Aorta (tissue), 5 donors: ENCODE measurements at regions of chr3 and their contacts with region 1.

Region 1: DNA sequence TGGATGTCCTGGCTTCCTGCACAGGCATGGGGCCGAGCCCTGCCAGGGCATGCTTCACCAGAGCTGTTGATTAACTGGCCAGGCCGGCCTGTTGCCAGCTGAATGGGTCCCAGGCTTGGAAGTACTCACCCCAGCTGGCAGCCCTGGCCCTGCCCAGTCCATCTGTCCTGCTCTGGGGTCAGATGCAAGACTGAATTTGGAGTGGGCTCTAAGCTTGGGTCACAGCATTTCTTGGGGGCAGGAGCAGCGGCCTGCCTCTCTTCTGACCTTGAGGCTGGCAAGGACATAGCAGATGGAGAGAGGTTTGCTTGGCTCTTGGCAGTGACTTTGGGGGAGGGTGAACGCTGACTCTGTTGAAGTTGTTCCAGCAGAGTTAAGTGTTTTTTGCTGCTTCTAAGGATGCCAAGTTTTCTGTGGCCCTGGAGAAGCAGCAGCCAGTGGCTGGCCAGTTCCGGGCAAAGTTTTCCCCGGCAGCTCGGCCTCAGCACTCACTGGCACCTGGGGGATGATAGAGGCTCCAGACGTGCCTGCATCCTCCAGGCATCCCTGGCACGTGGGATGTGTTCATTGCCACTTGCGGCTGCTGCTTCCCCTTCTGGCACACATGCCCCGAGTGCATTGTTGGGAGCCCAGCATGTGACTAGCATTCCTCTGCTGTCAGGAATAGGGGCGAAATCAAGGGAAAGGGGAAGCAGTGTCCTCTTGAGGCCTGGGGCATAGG is 22.9 kb downstream of the PDIA5 start:
- DNase-seq: peak; percentile 87 to 92
- ATAC-seq: peak; percentile 78
- H3K4me3 ChIP-seq: no peak overlapping the region
- H3K27ac ChIP-seq: peak overlapping the region in 1 of 2 donors; percentile 74
- H3K4me1 ChIP-seq: peaks cover under 1 to 6% of the 10 kb centered on the region in 2 donors
- H3K27me3 ChIP-seq: no peaks in the 10 kb centered on the region

Region 2: DNA sequence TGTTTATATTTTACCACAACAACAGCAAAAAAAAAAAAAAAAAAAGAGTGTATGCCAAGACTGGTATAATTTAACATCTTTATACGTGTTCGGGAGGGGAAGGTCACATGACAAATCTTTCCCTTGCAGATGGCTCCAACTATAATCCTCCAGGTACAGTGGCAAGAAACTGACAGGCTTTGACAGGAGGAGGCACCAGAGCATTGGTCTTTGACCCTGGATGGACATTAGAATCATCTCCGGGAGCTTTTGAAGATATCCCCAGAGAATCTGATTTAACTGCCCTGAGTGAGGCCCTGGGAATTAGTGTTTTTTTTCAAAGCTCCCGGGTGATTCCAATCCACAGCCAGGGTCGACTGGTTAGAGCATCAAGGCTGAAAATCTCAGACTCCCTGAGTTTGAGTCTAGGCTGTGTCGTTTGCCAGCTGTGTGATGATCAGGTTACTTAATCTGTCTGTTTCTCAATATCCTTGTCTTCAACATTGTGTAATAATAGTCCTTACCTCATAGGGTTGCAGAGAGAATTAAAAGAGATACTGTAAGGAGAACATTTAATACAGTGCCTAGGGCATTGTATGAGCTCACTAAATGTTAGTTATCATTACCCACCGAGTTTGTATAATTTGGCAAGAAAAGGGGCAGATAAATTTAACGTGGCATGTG is 53.3 kb before region 1 on chr3:
- intact Hi-C with region 1: loop called in 1 of 2 experiments (anchors 2 kb)
- DNase-seq: no peak
- ATAC-seq: peak; percentile 83
- H3K4me3 ChIP-seq: no peak overlapping the region
- H3K27ac ChIP-seq: no peak overlapping the region
- H3K4me1 ChIP-seq: peaks cover 0 to 4% of the 10 kb centered on the region in 2 donors
- H3K27me3 ChIP-seq: no peaks in the 10 kb centered on the region